Motor neuron (in vitro differentiated cells): ENCODE measurements at regions of chr5 and their contacts with region 1.

Region 1: GRCh38 chr5:133868946-133869518 is 99.4 kb downstream of the C5orf15 start:
- ATAC-seq: peak; percentile 72 to 88 (median 74)
- H3K4me3 ChIP-seq: no peak overlapping the region
- H3K27ac ChIP-seq: peak overlapping the region; percentile 58 to 63
- H3K4me1 ChIP-seq: peaks cover 10 to 23% of the 10 kb centered on the region in 2 donors

Region 2: DNA sequence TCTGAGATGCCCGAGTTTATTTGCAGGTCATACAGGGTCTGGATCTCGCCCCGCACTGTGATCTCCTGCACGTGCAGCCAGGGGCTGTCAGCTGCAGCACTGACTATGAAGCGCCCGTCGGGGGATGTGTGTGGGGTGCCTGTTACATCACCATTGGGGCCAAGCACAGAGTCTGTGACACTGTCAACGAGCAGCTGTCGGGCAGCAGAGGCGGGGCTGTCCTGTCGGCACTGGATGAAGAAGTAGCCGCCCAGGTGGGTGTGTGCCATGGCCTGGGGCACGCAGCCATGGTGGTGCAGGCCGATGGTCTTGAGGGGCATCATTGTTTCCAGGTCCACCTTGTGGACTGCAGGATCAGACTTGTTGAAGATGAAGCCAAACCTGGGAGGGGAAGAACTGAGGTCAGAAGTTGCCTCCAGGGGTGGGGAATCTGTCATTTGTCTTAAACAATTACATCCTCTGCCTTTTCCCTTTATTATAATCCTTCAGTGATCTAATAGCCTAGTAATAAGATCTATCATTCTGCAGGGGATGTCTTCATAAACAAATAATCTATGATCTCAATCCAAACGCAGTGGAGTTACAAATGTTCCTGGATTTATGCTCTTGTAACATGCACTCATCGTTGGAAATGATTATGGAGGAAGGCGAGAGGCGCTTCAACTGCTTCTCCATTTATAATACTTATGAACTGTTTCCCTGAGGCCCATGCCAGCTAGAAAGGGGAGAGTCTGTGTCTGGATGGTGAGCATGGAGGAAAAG is 669.4 kb before region 1 on chr5:
- in situ Hi-C with region 1: no loop called
- ATAC-seq: peak in 7 of 8 experiments; percentile 20 to 88 (median 79)
- H3K4me3 ChIP-seq: no peak overlapping the region
- H3K27ac ChIP-seq: no peak overlapping the region
- H3K4me1 ChIP-seq: peaks cover 14 to 17% of the 10 kb centered on the region in 2 donors

Region 3: DNA sequence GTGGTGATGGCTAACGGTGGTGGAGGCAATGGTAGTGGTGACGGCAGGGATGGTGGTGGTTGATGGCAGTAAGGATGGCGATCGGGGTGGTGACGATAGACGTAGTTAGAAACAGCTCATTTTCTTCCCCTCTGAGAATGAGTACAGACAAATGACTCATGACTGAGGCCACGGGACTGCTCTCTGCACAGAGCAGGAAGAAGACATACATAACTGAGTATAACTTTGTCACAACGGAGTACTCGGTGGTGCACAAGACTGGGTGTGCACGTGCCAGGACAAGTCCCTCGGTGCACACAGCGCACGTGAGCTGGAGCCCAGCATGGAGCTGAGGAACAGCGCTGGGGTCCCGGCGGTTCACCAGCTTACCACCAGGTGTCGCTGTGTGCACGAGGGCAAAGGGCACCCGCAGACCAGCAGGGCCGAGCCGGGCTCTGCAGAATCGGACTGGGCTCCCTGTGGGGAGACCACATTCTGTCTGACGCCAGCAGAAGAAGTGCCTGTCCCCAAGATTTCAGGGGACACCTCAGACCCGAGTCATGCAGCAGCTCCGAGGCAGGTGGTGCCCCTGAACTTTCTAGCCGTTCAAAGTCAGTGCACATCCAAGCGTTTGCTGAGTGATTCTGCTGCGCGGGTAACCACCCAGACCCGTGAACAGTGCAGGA is 445.3 kb before region 1 on chr5:
- in situ Hi-C with region 1: loop called in 1 of 9 experiments (anchors 10 kb)
- ATAC-seq: peak; percentile 86 to 97 (median 94)
- H3K4me3 ChIP-seq: no peak overlapping the region
- H3K27ac ChIP-seq: no peak overlapping the region
- H3K4me1 ChIP-seq: peaks cover 0 to 2% of the 10 kb centered on the region in 2 donors

Region 4: DNA sequence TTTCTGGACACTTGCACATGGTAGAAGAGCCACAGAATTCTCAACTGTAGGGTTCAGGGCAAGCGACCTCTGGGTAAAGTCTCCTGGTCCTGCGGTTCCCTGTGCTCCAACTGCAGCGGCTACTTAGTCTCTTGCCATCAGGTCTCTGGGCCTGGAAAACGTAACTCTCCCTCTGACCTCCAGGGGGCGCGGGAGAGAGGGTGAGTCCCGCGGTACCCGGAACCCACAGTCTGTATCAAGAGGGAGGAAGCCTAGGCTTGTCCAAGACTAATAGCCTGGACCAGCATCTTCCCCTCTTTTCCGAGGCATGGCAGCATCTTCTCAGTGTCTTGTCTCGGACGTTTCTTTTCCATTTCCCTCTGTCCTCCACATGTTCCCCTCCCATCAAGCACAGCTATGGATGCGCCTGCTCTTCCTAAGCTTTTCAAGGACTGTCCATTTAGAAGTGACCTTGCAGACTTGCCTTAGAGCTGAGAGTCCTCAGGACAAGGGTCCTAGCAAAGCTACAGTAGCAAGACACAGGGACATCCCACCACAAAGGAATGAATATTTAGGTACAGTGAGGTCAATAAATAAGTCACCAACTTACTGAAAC is 316.0 kb before region 1 on chr5:
- in situ Hi-C with region 1: loop called in 1 of 9 experiments (anchors 25 kb)
- ATAC-seq: peak in 5 of 8 experiments; percentile 19 to 91 (median 83)
- H3K4me3 ChIP-seq: no peak overlapping the region
- H3K27ac ChIP-seq: no peak overlapping the region
- H3K4me1 ChIP-seq: peaks cover 10 to 12% of the 10 kb centered on the region in 2 donors

Region 5: DNA sequence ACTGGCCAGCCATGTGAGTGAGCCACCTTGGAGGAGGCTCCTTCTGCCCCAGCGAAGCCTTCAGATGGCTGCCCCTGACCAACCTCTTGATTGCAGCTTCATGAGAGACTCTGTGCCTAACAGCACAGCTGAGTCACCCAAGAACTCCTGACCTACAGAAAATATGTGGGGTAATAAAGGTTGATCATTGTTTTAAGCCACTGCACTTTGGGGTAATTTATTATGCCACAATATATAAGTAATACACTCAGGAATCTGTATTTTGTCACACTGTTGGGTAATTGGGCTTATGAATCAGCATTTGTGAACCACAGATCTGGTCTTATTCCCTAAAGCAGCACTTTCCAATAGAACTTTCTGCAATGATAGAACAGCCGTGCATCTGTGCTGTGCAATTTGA is 160.1 kb after region 1 on chr5:
- in situ Hi-C with region 1: no loop called
- ATAC-seq: no peak
- H3K4me3 ChIP-seq: no peak overlapping the region
- H3K27ac ChIP-seq: no peak overlapping the region
- H3K4me1 ChIP-seq: no peaks in the 10 kb centered on the region